ENCODE measurements at regions of chr4 and their contacts with region 1.

Region 1: DNA sequence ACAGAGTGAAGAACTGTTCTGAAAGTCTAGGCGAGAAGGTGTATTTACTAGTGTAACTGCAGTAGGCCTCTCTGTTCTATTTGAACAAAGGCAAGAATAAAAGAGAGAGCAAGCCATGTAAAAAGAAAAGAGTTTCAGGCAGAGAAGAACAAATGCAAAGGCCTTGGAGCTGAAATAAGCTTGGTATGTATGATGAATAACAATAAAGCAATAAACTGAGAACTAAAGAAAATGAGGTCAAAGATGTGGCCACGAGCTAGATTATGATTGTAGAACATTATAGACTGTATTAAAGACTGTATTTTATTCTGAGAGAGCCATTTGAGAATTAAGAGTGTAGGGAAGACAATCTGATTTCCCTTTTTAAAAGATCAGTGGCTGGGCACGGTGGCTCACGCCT is 160.5 kb downstream of the LRBA start:
- DNase-seq: no peak

Region 2: DNA sequence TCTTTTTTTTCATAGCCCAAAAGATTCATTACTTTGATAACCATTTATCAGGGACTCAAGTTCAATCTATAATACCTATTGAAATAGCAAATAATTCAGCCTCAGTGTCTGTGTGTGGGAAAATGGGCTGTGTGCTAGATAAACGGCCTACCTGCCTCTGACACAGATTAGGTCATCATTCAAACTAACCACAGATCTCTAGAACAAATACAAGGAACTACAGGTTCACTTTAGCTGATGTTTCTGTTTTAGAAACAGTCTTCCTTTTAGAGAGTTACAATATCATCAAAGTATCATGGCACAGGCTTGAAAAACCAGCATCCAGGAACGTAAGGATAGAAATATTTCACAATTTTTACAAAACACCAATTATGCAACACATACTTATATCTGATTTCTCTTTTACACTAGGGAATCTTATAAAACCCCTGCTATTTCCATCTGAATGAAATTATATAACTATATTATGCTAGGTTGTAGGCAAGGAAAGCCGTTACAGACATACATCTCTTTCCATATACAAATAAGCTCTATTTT is 329.2 kb before region 1 on chr4:
- CTCF ChIA-PET with region 1: no interaction called
- POLR2A ChIA-PET with region 1: no interaction called
- DNase-seq: no peak

Region 3: GRCh38 chr4:150619042-150619441 is 235.6 kb before region 1 on chr4:
- CTCF ChIA-PET with region 1: no interaction called
- POLR2A ChIA-PET with region 1: no interaction called
- DNase-seq: no peak

Region 4: DNA sequence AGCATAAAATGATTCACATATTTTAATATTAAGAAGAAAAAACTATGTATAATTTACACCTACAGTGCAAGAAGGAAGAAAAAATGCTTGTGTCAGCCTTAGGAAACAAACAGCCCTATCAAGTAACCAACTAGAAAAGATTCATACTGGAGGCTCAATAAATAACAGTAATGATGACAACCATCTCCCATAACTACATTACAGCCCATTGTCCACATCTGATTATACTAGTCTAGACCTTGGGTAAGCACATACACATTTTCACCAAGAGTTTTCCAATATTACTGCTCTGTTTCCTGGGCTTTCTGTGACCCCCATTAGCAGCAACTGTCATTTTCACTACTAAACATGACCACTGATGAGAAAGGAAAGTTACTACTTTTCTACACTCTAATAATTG is 103.0 kb before region 1 on chr4:
- CTCF ChIA-PET with region 1: interaction called, 10 read pairs
- POLR2A ChIA-PET with region 1: no interaction called
- DNase-seq: no peak

Measured in HEK293T (cell line).